Activated T-helper 2 cell treated with anti-CD3 and anti-CD28 coated beads, Interferon-gamma antibody, Interleukin-2, Interleukin-4, amounts not matched to agents 10 μg/mL and 5 μg/mL and 100 μg/mL, durations not matched to agents 14 hours and 24 hours and 36 hours (primary cell): ENCODE measurements at regions of chr17 and their contacts with region 1.

Region 1: DNA sequence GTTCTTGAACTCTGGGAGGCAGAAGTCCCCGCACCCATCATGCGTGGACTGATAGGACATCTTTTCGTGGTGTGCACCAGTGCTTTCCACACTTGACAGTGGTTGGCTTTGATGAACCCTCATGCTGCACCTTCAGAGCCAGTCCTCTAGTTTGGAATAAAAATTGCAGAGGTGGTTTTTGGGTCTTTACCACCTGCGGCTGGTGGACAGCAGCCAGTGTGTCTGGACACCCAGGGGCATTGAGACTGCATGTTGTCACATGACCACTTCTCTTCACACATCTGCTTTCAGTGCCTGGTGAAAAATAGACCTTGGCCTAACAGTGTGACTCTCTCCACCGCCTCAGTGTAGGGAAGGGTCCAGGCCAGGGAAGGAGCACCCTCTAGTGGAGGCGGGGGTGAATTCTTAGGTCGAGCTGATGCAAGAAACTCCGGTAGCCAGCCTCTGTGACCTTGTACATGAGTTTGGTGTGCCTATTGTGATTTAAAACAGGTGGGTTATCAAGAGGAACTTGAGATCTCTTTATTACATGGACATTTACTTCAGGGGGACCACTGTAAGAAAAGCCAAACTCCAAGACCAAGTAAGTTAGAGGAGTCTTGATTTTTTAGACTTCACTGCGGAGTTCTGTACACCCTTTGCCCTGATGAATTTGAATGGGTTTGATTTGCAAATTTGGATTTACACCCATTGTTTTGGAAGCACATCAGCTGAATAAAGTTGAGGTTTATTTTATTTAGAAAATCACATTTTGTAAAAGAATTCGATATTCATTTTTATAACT is 17.9 kb downstream of the GOSR2 start:
- DNase-seq: peak; percentile 60
- H3K4me3 Mint-ChIP-seq: no peak overlapping the region
- H3K27ac Mint-ChIP-seq: peak overlapping the region; percentile 24
- H3K4me1 Mint-ChIP-seq: peaks cover 8% of the 10 kb centered on the region
- H3K27me3 Mint-ChIP-seq: no peaks in the 10 kb centered on the region

Region 2: DNA sequence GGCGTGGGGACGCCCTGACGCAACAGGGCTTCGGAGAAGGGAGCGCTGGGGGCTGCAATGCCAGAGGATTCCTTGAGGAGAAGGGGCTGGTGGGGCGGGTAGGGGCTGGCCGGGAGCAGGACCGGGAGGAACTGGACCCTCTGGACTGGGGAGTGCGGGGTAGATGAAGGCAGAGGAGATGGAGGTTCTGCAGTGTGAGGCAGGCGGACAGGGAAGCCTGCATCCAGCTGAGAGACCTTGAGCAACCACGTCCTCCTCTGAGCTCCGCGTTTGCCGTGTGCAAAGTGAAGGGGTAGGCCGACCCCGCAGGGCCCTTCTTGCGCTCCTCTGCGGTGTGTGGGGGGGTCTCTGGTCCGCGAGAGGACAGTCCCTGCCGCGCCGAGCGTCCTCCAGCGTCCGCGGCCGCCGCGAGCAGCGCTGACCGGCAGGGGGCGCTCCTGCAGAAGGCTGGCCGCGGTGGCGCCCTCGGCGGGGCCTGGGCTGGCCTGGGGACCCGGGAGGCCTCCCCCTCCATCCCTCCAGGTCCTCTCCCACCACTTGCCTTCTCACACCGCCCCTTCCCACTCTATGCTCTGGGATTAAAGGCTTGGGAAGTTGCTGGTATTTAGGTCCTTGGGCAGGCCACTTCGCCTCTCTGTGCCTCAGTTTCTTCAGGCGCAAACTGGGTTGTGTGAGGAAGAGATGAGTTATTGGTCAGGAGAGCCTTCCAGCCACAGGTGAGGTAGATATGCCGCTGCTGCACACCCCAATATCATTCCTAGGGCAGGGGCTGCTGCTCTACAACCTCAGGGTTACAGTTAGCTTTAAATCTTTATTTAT is 99.0 kb before region 1 on chr17:
- intact Hi-C with region 1: loop called (anchors 5 kb)
- DNase-seq: no peak
- H3K4me3 Mint-ChIP-seq: no peak overlapping the region
- H3K27ac Mint-ChIP-seq: no peak overlapping the region
- H3K4me1 Mint-ChIP-seq: no peaks in the 10 kb centered on the region
- H3K27me3 Mint-ChIP-seq: peaks cover 23% of the 10 kb centered on the region

Region 3: DNA sequence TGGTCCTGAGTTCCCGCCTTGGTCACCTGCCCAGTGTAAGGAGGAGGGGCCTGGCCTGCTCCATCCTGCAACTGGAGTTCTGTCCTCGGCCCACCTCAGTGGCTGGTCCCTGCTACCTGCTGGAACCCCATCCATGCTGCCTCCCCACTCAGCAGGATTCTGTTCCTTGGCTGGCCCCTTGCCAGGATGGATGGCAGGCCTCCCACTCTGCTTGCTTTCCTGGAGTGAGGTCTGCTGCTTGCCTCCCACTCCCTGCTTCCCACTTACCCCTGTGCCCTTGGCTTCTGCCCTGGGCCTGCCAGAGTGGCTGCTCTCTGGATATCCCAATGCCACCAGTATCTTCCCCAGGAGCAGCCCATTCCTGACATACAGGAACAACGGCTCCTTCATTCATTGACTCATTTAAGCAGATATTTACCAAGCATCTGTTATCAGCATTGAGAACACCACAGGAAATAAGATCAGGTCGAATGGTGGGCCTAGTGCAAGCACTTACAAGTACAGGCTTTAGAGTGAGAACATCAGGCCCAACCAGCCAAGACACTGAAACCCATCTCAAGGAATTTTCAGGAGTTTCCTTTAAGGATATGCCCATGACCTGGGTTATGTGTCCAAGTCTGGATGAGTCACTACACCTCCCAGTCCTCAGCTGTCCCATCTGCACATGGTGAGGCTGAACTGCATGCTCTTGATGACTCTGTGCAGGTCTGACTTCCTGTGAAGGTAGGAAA is 55.2 kb after region 1 on chr17:
- intact Hi-C with region 1: loop called (anchors 2 kb)
- DNase-seq: no peak
- H3K4me3 Mint-ChIP-seq: no peak overlapping the region
- H3K27ac Mint-ChIP-seq: no peak overlapping the region
- H3K4me1 Mint-ChIP-seq: no peaks in the 10 kb centered on the region
- H3K27me3 Mint-ChIP-seq: peaks cover 3% of the 10 kb centered on the region